ENCODE measurements at regions of chr15 and their contacts with region 1.

Region 1: GRCh38 chr15:53251996-53252395 is 461.9 kb upstream of the ONECUT1 start:
- DNase-seq: no peak
- H3K4me3 ChIP-seq: no peak overlapping the region
- H3K27ac ChIP-seq: no peak overlapping the region
- H3K4me1 ChIP-seq: no peaks in the 10 kb centered on the region
- H3K27me3 ChIP-seq: no peaks in the 10 kb centered on the region
- CTCF ChIP-seq: no peak
- EP300 ChIP-seq: no peak
- POLR2A ChIP-seq: no peak

Region 2: DNA sequence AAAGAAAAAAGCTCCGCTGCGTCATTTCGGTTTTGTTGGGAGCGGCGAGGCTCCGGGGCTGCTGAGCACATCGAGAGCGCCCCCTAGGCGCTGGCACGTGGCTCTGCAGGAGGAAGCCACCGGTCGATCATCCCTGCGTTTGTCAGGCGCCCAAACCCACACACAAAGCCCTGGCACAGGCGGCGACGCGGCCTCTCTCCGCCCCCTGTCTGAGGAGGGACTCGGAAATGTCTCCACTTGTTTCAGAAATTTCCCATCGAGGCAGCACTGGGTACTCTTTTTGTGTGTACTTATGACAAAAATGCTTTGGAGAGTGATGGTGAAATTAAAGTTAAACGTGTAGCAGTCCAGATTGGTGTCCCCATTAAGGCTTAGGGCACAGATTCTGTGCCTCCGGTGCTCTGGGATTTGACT is 54.6 kb before region 1 on chr15:
- intact Hi-C with region 1: loop called (anchors 10 kb)
- DNase-seq: peak; percentile 70
- H3K4me3 ChIP-seq: peak overlapping the region in 1 of 4 donors; percentile 20
- H3K27ac ChIP-seq: no peak overlapping the region
- H3K4me1 ChIP-seq: peaks cover 0 to 8% (median 0%) of the 10 kb centered on the region in 4 donors
- H3K27me3 ChIP-seq: peaks cover 0 to 10% (median 4%) of the 10 kb centered on the region in 3 donors
- CTCF ChIP-seq: peak in 3 of 4 experiments; percentile 44 to 59 (median 48)
- EP300 ChIP-seq: no peak
- POLR2A ChIP-seq: no peak

Measured in sigmoid colon (tissue), 7 donors.